HepG2 (cell line): ENCODE measurements at regions of chr11 and their contacts with region 1.

Region 1: GRCh38 chr11:78416305-78417178 is 1.1 kb downstream of the GAB2 start:
- DNase-seq: peak; percentile 83
- ATAC-seq: peak; percentile 83
- H3K4me3 ChIP-seq: peak overlapping the region; percentile 62 to 81 (median 78)
- H3K27ac ChIP-seq: peak overlapping the region; percentile 84
- H3K4me1 ChIP-seq: peaks cover 41% of the 10 kb centered on the region
- H3K27me3 ChIP-seq: no peaks in the 10 kb centered on the region
- CTCF ChIP-seq: peak; percentile 72
- EP300 ChIP-seq: no peak
- POLR2A ChIP-seq: peak; percentile 39 to 64; a peak in 3 of 4 replicates
- RAD21 ChIP-seq: peak; percentile 42; the same call in 1 of the 2 replicates

Region 2: DNA sequence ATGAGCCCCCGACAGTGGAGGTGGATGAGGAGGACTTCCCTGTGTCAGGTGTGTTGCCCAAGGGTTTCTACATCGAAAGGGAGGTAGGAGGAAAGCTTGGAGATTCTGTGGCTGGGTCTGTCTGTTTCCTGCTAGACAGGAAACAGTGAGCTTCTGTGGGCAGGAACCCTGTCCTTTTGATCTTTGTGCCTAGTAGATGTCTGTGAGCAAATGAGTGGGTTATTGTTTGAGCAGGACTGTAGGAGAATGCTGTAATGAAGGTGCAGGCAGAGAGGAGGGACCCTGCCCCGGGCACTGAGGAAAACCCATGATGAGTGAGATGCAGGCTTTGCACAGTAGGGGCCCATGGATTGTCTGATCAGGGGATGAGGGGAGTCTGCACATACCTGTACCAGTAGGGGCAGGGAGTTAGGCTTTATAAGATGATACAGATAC is 213.8 kb before region 1 on chr11:
- CTCF ChIA-PET with region 1: no interaction called
- POLR2A ChIA-PET with region 1: no interaction called
- in situ Hi-C with region 1: no loop called
- intact Hi-C with region 1: loop called (anchors 1 kb)
- DNase-seq: peak; percentile 95
- ATAC-seq: peak; percentile 97
- H3K4me3 ChIP-seq: peak overlapping the region in 1 of 3 experiments; percentile 21; a peak in 2 of 6 replicates
- H3K27ac ChIP-seq: peak overlapping the region; percentile 61
- H3K4me1 ChIP-seq: peaks cover 42% of the 10 kb centered on the region
- H3K27me3 ChIP-seq: no peaks in the 10 kb centered on the region
- CTCF ChIP-seq: no peak
- EP300 ChIP-seq: peak; percentile 37 to 68; a peak in 3 of 4 replicates
- POLR2A ChIP-seq: 0 out of 4 replicates have a peak, but pooled peaks of 1 of the 2 experiments have one; percentile 18
- RAD21 ChIP-seq: peak; percentile 34; the same call in 1 of the 2 replicates

Region 3: DNA sequence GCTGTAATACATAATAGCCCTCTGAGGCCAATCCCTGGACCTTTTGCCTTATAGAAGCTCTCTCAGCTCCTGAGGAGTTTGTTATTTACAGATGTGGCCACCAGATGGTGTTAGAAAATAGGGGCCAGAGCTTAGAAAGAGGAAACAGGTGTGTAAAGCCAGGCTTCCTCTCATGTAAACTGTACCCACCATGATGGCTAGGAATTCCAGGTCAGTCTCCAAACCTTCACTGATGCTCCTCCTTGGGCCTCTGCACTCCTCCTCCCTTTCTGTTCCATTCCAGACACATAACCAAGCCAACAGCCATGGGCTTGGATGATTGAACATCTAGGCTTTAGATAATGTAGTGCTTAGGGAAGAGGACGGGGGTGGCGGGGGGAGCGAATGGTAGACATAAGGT is 188.1 kb before region 1 on chr11:
- CTCF ChIA-PET with region 1: no interaction called
- POLR2A ChIA-PET with region 1: interaction called, 4 read pairs
- in situ Hi-C with region 1: loop called (anchors 5 kb)
- intact Hi-C with region 1: loop called (anchors 1 kb)
- DNase-seq: peak; percentile 65
- ATAC-seq: peak; percentile 88
- H3K4me3 ChIP-seq: no peak overlapping the region
- H3K27ac ChIP-seq: no peak overlapping the region
- H3K4me1 ChIP-seq: peaks cover 18% of the 10 kb centered on the region
- H3K27me3 ChIP-seq: no peaks in the 10 kb centered on the region
- CTCF ChIP-seq: peak; percentile 81
- EP300 ChIP-seq: peak in 1 of 2 experiments; percentile 8; a peak in 1 of 4 replicates
- POLR2A ChIP-seq: no peak
- RAD21 ChIP-seq: peak; percentile 75

Region 4: GRCh38 chr11:78310500-78310909 is 106.0 kb before region 1 on chr11:
- CTCF ChIA-PET with region 1: interaction called, 3 read pairs
- POLR2A ChIA-PET with region 1: interaction called, 3 read pairs
- in situ Hi-C with region 1: no loop called
- intact Hi-C with region 1: loop called (anchors 2 kb)
- DNase-seq: peak; percentile 77
- ATAC-seq: peak; percentile 96
- H3K4me3 ChIP-seq: peak overlapping the region in 2 of 3 experiments; percentile 38 to 49; a peak in 2 of 6 replicates
- H3K27ac ChIP-seq: peak overlapping the region; percentile 48
- H3K4me1 ChIP-seq: peaks cover 50% of the 10 kb centered on the region
- H3K27me3 ChIP-seq: no peaks in the 10 kb centered on the region; a peak in 1 of 5 replicates
- CTCF ChIP-seq: 0 out of 2 replicates have a peak, but pooled peaks have one; percentile 16
- EP300 ChIP-seq: no peak
- POLR2A ChIP-seq: no peak
- RAD21 ChIP-seq: no peak

Region 5: DNA sequence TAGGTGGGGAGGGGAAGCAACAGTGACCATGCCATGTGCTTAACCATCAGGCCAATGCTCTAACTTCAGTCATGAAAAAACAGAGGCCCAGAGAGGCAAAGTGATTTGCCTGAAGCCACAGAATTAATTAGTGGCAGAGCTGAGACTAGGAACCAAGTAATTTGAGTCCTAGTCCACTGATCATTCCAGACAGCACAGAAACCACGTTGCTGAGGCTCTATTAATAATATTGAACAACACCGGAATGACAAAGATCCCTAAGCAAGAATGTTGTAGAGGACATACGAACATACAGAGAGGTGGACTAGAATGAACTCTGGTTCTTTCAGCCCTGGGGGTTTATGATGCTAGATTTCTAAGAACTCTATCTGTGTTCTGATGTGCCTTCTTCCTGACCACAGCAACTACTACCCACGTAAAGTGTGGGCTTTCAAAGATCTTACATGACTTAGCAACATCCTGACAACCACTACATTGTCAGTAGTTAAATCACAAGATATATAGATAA is 91.2 kb before region 1 on chr11:
- CTCF ChIA-PET with region 1: no interaction called
- POLR2A ChIA-PET with region 1: no interaction called
- in situ Hi-C with region 1: no loop called
- intact Hi-C with region 1: no loop called
- DNase-seq: no peak
- ATAC-seq: no peak
- H3K4me3 ChIP-seq: no peak overlapping the region
- H3K27ac ChIP-seq: no peak overlapping the region
- H3K4me1 ChIP-seq: peaks cover 13% of the 10 kb centered on the region
- H3K27me3 ChIP-seq: no peaks in the 10 kb centered on the region
- CTCF ChIP-seq: no peak
- EP300 ChIP-seq: no peak
- POLR2A ChIP-seq: no peak
- RAD21 ChIP-seq: no peak

Region 6: DNA sequence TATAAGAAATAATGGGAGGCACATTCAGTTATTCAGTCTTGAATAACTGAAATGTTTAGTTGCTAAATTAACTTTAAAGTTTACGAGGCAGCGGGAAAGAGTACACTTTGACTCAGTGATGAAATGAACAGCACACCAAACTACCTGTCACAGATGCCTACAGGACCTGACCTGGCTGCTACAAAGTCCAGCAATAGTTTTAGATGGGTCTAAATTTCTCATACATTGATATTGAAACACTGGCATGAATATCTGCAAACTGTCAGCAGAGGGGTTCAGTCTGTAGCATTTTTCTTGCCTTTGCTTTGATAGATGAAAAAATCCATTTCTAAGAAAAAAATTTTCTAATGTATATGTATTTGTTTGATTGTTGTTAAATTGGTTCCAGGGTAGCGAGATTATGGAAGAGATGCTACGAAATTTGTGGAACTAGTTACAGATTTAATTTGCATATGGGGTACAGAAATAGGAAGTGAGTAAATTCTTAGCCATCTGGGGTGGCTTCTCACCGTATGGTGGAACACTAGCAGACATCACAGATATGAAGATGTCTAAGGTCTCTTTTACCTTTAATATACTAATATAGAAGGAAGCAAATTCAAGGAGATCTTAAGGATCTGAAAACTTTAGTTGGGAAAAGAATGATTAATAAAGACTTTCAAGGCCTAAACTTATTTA is 21.9 kb after region 1 on chr11:
- CTCF ChIA-PET with region 1: no interaction called
- POLR2A ChIA-PET with region 1: no interaction called
- in situ Hi-C with region 1: no loop called
- intact Hi-C with region 1: no loop called
- DNase-seq: no peak
- ATAC-seq: no peak
- H3K4me3 ChIP-seq: no peak overlapping the region
- H3K27ac ChIP-seq: no peak overlapping the region
- H3K4me1 ChIP-seq: no peaks in the 10 kb centered on the region
- H3K27me3 ChIP-seq: no peaks in the 10 kb centered on the region
- CTCF ChIP-seq: no peak
- EP300 ChIP-seq: no peak
- POLR2A ChIP-seq: no peak
- RAD21 ChIP-seq: no peak

Region 7: GRCh38 chr11:78504181-78504580 is 87.6 kb after region 1 on chr11:
- CTCF ChIA-PET with region 1: no interaction called
- POLR2A ChIA-PET with region 1: no interaction called
- in situ Hi-C with region 1: no loop called
- intact Hi-C with region 1: no loop called
- DNase-seq: no peak
- ATAC-seq: no peak
- H3K4me3 ChIP-seq: no peak overlapping the region
- H3K27ac ChIP-seq: no peak overlapping the region
- H3K4me1 ChIP-seq: 0 out of 2 replicates have a peak, but pooled peaks cover 5% of the 10 kb centered on the region
- H3K27me3 ChIP-seq: no peaks in the 10 kb centered on the region
- CTCF ChIP-seq: no peak
- EP300 ChIP-seq: no peak
- POLR2A ChIP-seq: no peak
- RAD21 ChIP-seq: no peak

Region 8: GRCh38 chr11:78564490-78565467 is 148.2 kb after region 1 on chr11:
- CTCF ChIA-PET with region 1: interaction called, 10 read pairs
- POLR2A ChIA-PET with region 1: interaction called, 3 read pairs
- in situ Hi-C with region 1: no loop called
- intact Hi-C with region 1: loop called (anchors 1 kb)
- DNase-seq: peak; percentile 60
- ATAC-seq: peak; percentile 59; the same call in 2 of the 3 replicates
- H3K4me3 ChIP-seq: no peak overlapping the region
- H3K27ac ChIP-seq: peak overlapping the region; percentile 10
- H3K4me1 ChIP-seq: peaks cover 51% of the 10 kb centered on the region
- H3K27me3 ChIP-seq: no peaks in the 10 kb centered on the region
- CTCF ChIP-seq: peak; percentile 64
- EP300 ChIP-seq: no peak
- POLR2A ChIP-seq: no peak
- RAD21 ChIP-seq: no peak